IMR-90 (cell line): ENCODE measurements at regions of chr9 and their contacts with region 1.

Region 1: GRCh38 chr9:136488247-136489214 is 5.7 kb upstream of the SEC16A start:
- DNase-seq: peak; percentile 8
- ATAC-seq: peak; percentile 30; the same call in 1 of the 2 replicates
- H3K4me3 ChIP-seq: no peak overlapping the region
- H3K27ac ChIP-seq: no peak overlapping the region
- H3K4me1 ChIP-seq: 0 out of 2 replicates have a peak, but pooled peaks cover 4% of the 10 kb centered on the region
- H3K27me3 ChIP-seq: no peaks in the 10 kb centered on the region; the same call in 1 of the 2 replicates
- CTCF ChIP-seq: peak; percentile 93
- POLR2A ChIP-seq: no peak
- RAD21 ChIP-seq: peak; percentile 94

Region 2: DNA sequence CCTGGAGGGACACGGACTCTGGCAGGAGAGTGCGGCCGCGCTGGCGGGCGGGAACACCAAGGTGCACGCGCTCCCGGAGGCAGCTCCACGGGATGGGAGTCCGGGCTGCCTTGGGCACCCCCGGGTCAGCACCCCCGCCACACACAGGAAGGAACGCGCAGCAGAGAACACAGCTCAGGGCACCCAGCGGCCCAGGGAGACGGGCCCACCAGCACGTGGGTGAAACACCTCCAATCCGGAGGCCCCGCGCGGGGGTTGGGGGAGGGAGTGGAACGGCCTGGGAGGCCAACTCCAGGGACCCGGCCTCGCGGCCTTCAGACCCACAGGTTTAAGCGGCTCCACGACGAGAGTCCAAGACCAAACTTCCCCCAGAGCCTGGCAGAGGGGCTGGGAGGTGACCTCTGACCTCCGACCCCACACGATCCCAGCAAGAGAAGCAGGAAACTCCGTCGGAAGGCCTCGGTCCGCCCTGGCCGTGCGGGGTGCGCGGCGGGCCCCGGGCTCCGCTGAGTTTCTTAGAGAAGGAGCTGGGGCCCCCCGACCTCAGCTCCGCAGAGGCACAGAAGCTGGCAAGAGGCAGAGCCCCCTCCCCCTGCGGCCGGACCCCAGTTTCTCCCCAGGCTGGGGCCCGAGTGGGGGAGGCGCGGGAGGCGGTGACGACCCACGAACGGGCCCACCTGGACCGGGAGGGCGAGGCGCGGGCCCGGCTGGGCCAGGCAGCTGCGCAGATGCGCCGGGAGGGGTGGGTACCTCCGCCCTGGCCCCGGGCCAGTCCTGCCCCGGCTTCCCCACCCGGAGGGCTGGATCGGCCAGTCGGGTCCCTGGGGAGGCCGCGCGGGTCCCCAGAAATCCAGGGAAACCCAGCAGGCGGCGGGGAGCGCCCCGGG is 394.3 kb before region 1 on chr9:
- CTCF ChIA-PET with region 1: no interaction called
- POLR2A ChIA-PET with region 1: no interaction called
- dilution Hi-C with region 1: no loop called
- in situ Hi-C with region 1: no loop called
- intact Hi-C with region 1: no loop called
- DNase-seq: peak; percentile 31
- ATAC-seq: peak; percentile 46
- H3K4me3 ChIP-seq: peak overlapping the region; percentile 94
- H3K27ac ChIP-seq: peak overlapping the region; percentile 80
- H3K4me1 ChIP-seq: peaks cover 23% of the 10 kb centered on the region
- H3K27me3 ChIP-seq: no peaks in the 10 kb centered on the region
- CTCF ChIP-seq: no peak
- POLR2A ChIP-seq: no peak
- RAD21 ChIP-seq: no peak

Region 3: DNA sequence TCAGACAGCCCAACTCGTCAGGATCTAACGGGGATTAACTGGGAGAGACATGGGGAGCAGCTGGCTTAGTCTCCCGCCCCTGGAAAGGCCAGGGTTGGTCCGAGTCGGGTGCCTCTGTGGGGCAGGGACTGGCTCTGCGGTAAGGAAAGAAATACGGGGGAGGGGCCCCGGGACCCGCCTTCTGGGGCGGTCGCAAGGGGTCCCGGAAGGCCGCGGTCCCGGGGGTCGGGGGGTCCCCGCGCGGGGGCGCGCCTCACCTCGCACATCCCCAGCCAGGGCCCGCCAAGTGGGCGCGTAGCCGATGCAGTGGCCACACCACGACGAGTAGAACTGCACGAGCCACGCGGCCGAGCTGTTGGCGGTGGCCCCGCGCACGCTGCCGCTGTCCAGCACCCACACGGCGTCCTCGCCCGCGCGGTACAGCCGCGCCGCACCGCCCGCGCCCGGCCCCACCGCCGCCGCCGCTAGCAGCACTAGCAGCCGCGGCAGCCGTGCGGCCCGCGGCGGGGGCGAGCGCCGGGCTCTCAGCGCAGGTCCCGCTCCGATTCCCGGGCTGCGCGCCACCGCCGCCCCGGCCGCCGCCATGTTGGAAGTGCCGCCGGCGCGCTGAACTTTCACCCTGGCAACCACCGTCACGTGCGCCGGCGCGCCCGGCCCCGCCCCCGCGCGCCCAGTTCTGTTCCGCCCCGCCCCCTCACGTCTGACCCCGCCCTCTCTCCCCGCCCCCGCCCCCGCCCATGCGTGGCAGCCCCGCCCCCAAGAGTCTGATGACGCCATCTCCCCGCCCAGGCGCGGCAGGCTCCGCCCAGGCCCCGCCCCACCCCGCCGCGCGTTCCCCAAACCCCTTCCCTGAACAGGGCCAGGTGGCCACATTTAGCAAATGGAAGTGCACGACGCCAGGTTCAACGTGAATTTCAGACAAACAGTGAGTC is 243.0 kb before region 1 on chr9 and contains the start of gene QSOX2:
- CTCF ChIA-PET with region 1: no interaction called
- POLR2A ChIA-PET with region 1: no interaction called
- dilution Hi-C with region 1: no loop called
- in situ Hi-C with region 1: no loop called
- intact Hi-C with region 1: no loop called
- DNase-seq: peak; percentile 76
- ATAC-seq: peak; percentile 94
- H3K4me3 ChIP-seq: peak within 1 kb of the TSS; percentile 79
- H3K27ac ChIP-seq: peak within 1 kb of the TSS; percentile 25; the same call in 1 of the 2 replicates
- H3K4me1 ChIP-seq: peaks cover 3% of the 10 kb centered on the region; the same call in 1 of the 2 replicates
- H3K27me3 ChIP-seq: peaks cover 33% of the 10 kb centered on the region
- CTCF ChIP-seq: no peak
- POLR2A ChIP-seq: no peak
- RAD21 ChIP-seq: no peak
- total RNA-seq, gene QSOX2: 5.0 and 5.9 TPM in 2 replicates

Region 4: DNA sequence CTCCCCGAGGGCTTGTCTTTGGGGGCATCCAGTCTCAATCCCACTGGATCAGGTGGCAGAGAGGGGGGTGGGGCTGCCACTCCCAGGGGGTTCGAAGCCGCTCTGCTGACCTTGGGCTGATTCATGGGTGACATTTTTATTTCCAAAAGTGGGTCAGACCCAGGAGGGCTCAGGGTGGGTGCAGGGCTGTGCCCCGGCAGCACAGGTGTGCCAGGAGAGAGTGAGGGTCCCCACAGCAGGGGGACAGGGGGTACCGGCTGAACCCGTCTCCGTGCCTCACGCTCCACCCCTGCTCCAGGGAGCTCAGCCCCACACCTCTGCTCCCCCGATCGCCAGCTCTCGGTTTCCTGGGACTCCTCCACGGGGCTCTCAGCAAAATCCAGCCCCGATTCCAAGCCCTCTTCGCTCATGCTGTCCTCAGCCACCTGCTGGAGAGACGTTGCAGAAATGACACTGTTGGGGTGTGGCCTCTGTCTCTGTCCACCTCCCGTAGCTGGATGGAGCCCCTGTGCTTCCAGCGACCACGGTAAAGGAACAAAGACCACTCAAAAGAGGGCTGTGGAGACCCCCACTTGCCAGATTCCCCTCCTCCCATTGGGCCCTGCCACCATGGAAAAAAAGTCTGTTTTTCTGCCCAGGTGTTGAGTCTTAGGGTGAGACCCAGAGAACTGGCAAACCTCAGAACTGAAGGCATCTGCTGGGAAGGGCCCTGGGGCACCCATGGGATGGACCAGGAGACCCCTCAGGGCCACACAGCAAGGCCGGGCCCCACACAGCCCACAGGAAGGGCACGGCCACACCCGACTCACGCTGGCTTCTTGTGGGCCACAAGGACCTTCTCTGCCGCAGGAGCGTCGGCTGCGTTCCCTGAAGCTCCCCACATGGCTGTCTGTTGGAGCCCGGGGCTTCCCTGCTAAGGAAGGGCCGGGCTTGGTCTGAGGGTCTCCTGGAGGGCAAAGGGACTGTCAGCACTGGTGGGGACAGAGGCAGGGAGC is 232.3 kb before region 1 on chr9:
- CTCF ChIA-PET with region 1: no interaction called
- POLR2A ChIA-PET with region 1: no interaction called
- dilution Hi-C with region 1: no loop called
- in situ Hi-C with region 1: no loop called
- intact Hi-C with region 1: no loop called
- DNase-seq: no peak
- ATAC-seq: no peak
- H3K4me3 ChIP-seq: no peak overlapping the region
- H3K27ac ChIP-seq: no peak overlapping the region
- H3K4me1 ChIP-seq: peaks cover 5% of the 10 kb centered on the region
- H3K27me3 ChIP-seq: peaks cover 23% of the 10 kb centered on the region
- CTCF ChIP-seq: no peak
- POLR2A ChIP-seq: no peak
- RAD21 ChIP-seq: no peak

Region 5: GRCh38 chr9:136445799-136446198 is 42.7 kb before region 1 on chr9:
- CTCF ChIA-PET with region 1: no interaction called
- POLR2A ChIA-PET with region 1: no interaction called
- dilution Hi-C with region 1: no loop called
- in situ Hi-C with region 1: no loop called
- intact Hi-C with region 1: no loop called
- DNase-seq: no peak
- ATAC-seq: no peak
- H3K4me3 ChIP-seq: no peak overlapping the region
- H3K27ac ChIP-seq: no peak overlapping the region
- H3K4me1 ChIP-seq: no peaks in the 10 kb centered on the region
- H3K27me3 ChIP-seq: no peaks in the 10 kb centered on the region
- CTCF ChIP-seq: no peak
- POLR2A ChIP-seq: no peak
- RAD21 ChIP-seq: no peak

Region 6: GRCh38 chr9:136625101-136626060 is 136.8 kb after region 1 on chr9:
- CTCF ChIA-PET with region 1: interaction called, 16 read pairs
- POLR2A ChIA-PET with region 1: interaction called, 3 read pairs
- dilution Hi-C with region 1: no loop called
- in situ Hi-C with region 1: loop called (anchors 5 kb)
- intact Hi-C with region 1: loop called (anchors 1 kb)
- DNase-seq: peak; percentile 31
- ATAC-seq: peak; percentile 73
- H3K4me3 ChIP-seq: no peak overlapping the region
- H3K27ac ChIP-seq: no peak overlapping the region
- H3K4me1 ChIP-seq: peaks cover 7% of the 10 kb centered on the region; the same call in 1 of the 2 replicates
- H3K27me3 ChIP-seq: no peaks in the 10 kb centered on the region; the same call in 1 of the 2 replicates
- CTCF ChIP-seq: peak; percentile 59
- POLR2A ChIP-seq: no peak
- RAD21 ChIP-seq: peak; percentile 75